HepG2 (cell line): ENCODE measurements at regions of chr19 and their contacts with region 1.

Region 1: GRCh38 chr19:2867025-2867991 is at the start of gene ZNF556:
- DNase-seq: peak; percentile 100
- ATAC-seq: peak; percentile 96
- H3K4me3 ChIP-seq: peak within 1 kb of the TSS; percentile 72 to 94 (median 80)
- H3K27ac ChIP-seq: peak within 1 kb of the TSS; percentile 90
- H3K4me1 ChIP-seq: peaks cover 41% of the 10 kb centered on the region
- H3K27me3 ChIP-seq: no peaks in the 10 kb centered on the region
- CTCF ChIP-seq: peak; percentile 25
- EP300 ChIP-seq: peak in 1 of 2 experiments; percentile 24; a peak in 1 of 4 replicates
- POLR2A ChIP-seq: peak; percentile 99
- RAD21 ChIP-seq: peak; percentile 56
- total RNA-seq, gene ZNF556: 28.6 and 41.2 TPM in 2 replicates

Region 2: GRCh38 chr19:2722541-2723344 is 144.6 kb before region 1 on chr19:
- CTCF ChIA-PET with region 1: no interaction called
- POLR2A ChIA-PET with region 1: no interaction called
- in situ Hi-C with region 1: no loop called
- intact Hi-C with region 1: no loop called
- DNase-seq: no peak
- ATAC-seq: peak; percentile 14
- H3K4me3 ChIP-seq: peak overlapping the region in 1 of 3 experiments; percentile 6; a peak in 1 of 6 replicates
- H3K27ac ChIP-seq: no peak overlapping the region
- H3K4me1 ChIP-seq: peaks cover 42% of the 10 kb centered on the region
- H3K27me3 ChIP-seq: peaks cover 24 to 61% of the 10 kb centered on the region in 2 experiments
- CTCF ChIP-seq: no peak
- EP300 ChIP-seq: no peak
- POLR2A ChIP-seq: no peak
- RAD21 ChIP-seq: no peak

Region 3: DNA sequence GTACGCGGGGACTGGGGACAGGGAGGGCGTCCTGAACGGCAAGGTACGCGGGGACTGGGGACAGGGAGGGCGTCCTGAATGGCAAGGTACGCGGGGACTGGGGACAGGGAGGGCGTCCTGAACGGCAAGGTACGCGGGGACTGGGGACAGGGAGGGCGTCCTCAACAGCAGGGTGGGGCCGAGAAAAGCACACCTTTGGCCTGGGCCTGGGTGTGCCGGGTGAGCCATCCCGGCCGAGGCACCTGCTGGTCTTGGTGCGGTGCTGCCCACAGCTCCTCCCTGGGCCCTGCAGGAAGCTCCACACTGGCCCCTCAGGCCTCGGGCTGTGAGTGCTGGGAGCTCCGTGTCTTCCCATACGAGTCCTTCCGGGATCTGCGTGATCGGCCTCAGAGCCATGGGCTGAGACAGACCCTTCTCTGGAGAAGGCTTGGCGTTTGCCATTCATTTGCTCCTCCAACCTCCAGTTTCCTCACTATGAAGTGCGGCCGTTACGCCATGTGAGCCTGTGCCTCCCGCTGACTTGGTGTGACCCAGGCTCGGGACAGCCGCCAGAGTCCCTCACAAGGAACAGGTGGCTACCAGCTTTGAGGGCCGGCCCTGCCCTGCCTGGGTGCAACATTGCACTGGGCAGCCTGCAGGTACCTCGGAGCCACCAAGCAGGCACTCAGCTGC is 55.4 kb before region 1 on chr19:
- CTCF ChIA-PET with region 1: no interaction called
- POLR2A ChIA-PET with region 1: interaction called, 18 read pairs
- in situ Hi-C with region 1: loop called (anchors 10 kb)
- intact Hi-C with region 1: no loop called
- DNase-seq: no peak
- ATAC-seq: no peak
- H3K4me3 ChIP-seq: no peak overlapping the region; a peak in 1 of 6 replicates
- H3K27ac ChIP-seq: peak overlapping the region; percentile 66
- H3K4me1 ChIP-seq: peaks cover 18% of the 10 kb centered on the region
- H3K27me3 ChIP-seq: no peaks in the 10 kb centered on the region
- CTCF ChIP-seq: no peak
- EP300 ChIP-seq: no peak
- POLR2A ChIP-seq: no peak
- RAD21 ChIP-seq: no peak

Region 4: DNA sequence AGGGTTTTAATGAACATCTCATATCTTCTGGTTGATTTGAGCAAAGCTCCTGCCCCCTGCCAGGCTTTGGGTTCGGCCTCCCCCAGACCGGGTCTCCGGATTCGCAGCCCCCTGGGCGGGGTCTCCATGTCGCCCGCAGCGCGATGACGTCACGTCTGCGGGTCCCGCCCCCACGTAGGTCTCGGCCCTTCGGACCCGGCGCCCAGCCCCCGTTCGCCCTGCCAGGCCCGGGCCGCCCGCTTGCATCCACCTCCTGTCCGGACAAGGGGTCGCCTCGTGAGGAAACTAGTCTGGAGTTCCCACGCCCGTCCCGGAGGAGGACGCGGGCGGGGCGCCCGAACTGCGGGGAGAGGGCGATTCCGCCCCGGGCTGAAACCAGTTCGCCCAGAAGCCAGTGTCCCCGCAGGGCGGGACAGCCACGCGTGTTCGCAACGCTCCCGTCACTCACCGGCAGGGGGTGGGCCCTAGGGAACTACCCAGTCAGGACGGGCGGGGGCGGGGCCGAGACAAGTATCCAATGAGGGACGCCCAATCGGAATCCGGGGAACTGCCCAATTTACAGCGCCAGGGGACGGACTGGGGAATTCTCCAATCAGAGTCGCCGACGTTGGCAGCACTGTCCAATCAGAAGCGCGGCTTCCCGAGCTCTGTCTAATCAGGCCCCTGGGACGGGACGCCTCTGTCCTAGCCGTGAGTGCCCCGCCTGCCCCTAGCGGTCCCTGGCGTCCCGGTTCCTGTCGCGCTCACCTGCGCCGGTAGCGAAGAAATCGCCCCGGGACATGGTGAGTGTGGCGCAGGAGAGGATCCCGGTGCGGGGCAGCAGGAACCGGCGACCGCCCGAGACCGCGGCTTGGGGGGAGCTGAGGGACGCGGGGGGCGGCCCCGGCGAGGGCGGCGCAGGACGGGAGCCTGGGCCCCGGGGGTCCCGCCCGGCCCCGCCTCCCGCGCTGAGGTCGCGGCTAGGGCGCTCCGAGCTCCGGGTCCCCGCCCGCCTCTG is 26.2 kb before region 1 on chr19 and contains the start of gene ZNF555:
- CTCF ChIA-PET with region 1: no interaction called
- POLR2A ChIA-PET with region 1: interaction called, 49 read pairs
- in situ Hi-C with region 1: no loop called
- intact Hi-C with region 1: no loop called
- DNase-seq: peak; percentile 98
- ATAC-seq: peak; percentile 97
- H3K4me3 ChIP-seq: peak within 1 kb of the TSS; percentile 83 to 93 (median 92)
- H3K27ac ChIP-seq: peak within 1 kb of the TSS; percentile 93
- H3K4me1 ChIP-seq: peaks cover 69% of the 10 kb centered on the region
- H3K27me3 ChIP-seq: no peaks in the 10 kb centered on the region
- CTCF ChIP-seq: peak; percentile 66
- EP300 ChIP-seq: no peak
- POLR2A ChIP-seq: peak; percentile 45 to 62; a peak in 3 of 4 replicates
- RAD21 ChIP-seq: peak; percentile 61
- total RNA-seq, gene ZNF555: 8.0 and 12.4 TPM in 2 replicates

Region 5: DNA sequence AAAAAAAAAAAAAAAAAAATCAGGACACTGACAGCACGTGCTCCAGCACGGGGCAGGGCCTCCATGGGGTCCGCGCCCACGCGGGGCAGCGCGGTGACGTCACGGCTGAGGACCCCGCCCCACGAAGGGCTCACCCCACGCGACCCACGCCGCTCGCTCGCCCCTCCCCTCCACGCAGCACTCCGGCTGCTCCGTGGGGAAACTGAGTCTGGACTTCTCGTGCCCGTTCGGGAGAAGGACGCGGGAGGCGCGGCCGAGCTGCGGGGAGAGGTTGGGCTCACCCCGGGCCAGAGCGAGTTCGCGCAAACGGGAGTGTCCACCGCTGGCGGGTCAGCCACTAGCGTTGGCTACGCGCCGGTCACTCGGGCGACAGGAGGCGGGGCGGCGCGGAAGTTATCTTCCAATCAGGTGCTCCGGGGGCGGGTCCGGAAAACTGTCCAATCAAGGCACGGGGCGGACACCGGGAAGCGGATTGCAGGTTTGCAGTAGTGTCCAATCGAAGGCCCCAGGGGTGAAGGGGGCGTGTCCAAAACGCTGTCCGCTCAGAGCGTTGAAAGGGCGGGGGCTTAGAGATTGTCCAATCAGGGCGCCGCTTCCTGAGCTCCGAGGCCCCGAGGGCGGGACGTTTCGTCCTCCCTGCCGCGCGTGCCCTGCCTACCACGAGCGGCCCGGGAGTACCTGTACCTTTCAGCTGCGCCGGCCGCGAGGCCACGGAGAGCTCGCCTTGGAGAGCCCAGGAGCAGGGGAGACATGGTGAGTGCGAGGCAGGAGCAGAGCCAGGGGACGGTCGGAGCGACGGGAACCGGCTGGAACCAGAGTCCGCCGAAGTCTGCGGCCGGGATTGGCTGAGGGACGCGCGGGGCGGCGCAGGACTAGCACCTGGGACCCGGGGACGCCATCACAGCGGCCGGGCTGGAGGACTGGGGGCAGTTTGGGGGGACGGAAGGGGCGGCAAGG is 33.3 kb after region 1 on chr19 and contains the start of gene ZNF57:
- CTCF ChIA-PET with region 1: no interaction called
- POLR2A ChIA-PET with region 1: interaction called, 17 read pairs
- in situ Hi-C with region 1: no loop called
- intact Hi-C with region 1: no loop called
- DNase-seq: peak; percentile 98
- ATAC-seq: peak; percentile 87
- H3K4me3 ChIP-seq: peak within 1 kb of the TSS; percentile 86 to 98 (median 91)
- H3K27ac ChIP-seq: peak within 1 kb of the TSS; percentile 88
- H3K4me1 ChIP-seq: peaks cover 49% of the 10 kb centered on the region
- H3K27me3 ChIP-seq: no peaks in the 10 kb centered on the region
- CTCF ChIP-seq: 0 out of 2 replicates have a peak, but pooled peaks have one; percentile 4
- EP300 ChIP-seq: no peak
- POLR2A ChIP-seq: peak; percentile 67 to 86
- RAD21 ChIP-seq: peak; percentile 66
- total RNA-seq, gene ZNF57: 17.5 and 25.8 TPM in 2 replicates